ENCODE measurements at regions of chr6 and their contacts with region 1.

Region 1: GRCh38 chr6:27592481-27593199 is 119.7 kb upstream of the ZNF184 start:
- DNase-seq: peak in 8 of 35 experiments; percentile 2 to 46 (median 10)
- ATAC-seq: peak in 2 of 4 experiments; percentile 24 to 48
- H3K4me3 ChIP-seq: no peak overlapping the region
- H3K4me3 Mint-ChIP-seq: no peak overlapping the region
- H3K27ac ChIP-seq: no peak overlapping the region
- H3K27ac Mint-ChIP-seq: no peak overlapping the region
- H3K4me1 ChIP-seq: peaks cover 2 to 14% of the 10 kb centered on the region in 2 experiments
- H3K4me1 Mint-ChIP-seq: no peaks in the 10 kb centered on the region
- H3K27me3 ChIP-seq: peaks cover 32 to 66% of the 10 kb centered on the region in 2 experiments
- H3K27me3 Mint-ChIP-seq: peaks cover 27 to 40% of the 10 kb centered on the region in 2 donors

Region 2: GRCh38 chr6:27518881-27519795 is 73.5 kb before region 1 on chr6:
- CTCF ChIA-PET with region 1: no interaction called
- POLR2A ChIA-PET with region 1: no interaction called
- DNase-seq: peak; percentile 37 to 84 (median 53)
- ATAC-seq: peak; percentile 67 to 80 (median 76)
- H3K4me3 ChIP-seq: peak overlapping the region; percentile 92 to 98
- H3K4me3 Mint-ChIP-seq: peak overlapping the region; percentile 86 to 99 (median 90)
- H3K27ac ChIP-seq: peak overlapping the region; percentile 78
- H3K27ac Mint-ChIP-seq: peak overlapping the region; percentile 60 to 71
- H3K4me1 ChIP-seq: peaks cover 6 to 15% of the 10 kb centered on the region in 2 experiments
- H3K4me1 Mint-ChIP-seq: peaks cover 16 to 27% (median 20%) of the 10 kb centered on the region in 3 donors
- H3K27me3 ChIP-seq: peaks cover 3 to 17% of the 10 kb centered on the region in 2 experiments
- H3K27me3 Mint-ChIP-seq: peaks cover 9 to 24% of the 10 kb centered on the region in 2 donors

Region 3: GRCh38 chr6:27642744-27643456 is 50.3 kb after region 1 on chr6:
- CTCF ChIA-PET with region 1: interaction called in 1 of 2 experiments, 12 read pairs
- POLR2A ChIA-PET with region 1: no interaction called
- DNase-seq: no peak
- ATAC-seq: no peak
- H3K4me3 ChIP-seq: no peak overlapping the region
- H3K4me3 Mint-ChIP-seq: no peak overlapping the region
- H3K27ac ChIP-seq: no peak overlapping the region
- H3K27ac Mint-ChIP-seq: no peak overlapping the region
- H3K4me1 ChIP-seq: no peaks in the 10 kb centered on the region
- H3K4me1 Mint-ChIP-seq: no peaks in the 10 kb centered on the region
- H3K27me3 ChIP-seq: peaks cover 0 to 38% of the 10 kb centered on the region in 2 experiments
- H3K27me3 Mint-ChIP-seq: peaks cover 60 to 61% of the 10 kb centered on the region in 2 donors

Region 4: DNA sequence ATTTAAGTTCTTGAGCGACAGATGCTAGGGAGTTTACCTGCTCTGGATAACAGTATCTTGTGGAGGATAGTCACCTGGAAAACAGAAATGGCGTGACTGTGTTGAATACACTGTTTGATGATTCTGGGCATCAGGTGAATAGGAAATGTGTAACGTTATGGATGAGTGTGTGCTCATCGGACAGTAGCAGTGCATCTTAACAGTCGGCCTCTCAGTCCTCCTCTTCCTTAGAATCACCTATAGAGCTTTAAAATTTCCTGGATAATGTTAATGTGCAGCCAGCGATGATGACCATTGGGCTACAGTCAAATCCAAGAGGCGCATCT is 101.9 kb after region 1 on chr6:
- CTCF ChIA-PET with region 1: no interaction called
- POLR2A ChIA-PET with region 1: no interaction called
- DNase-seq: no peak
- ATAC-seq: peak in 1 of 4 experiments; percentile 19
- H3K4me3 ChIP-seq: peak overlapping the region; percentile 71 to 98
- H3K4me3 Mint-ChIP-seq: peak overlapping the region; percentile 94 to 97 (median 97)
- H3K27ac ChIP-seq: no peak overlapping the region
- H3K27ac Mint-ChIP-seq: peak overlapping the region in 1 of 2 donors; percentile 90
- H3K4me1 ChIP-seq: peaks cover 0 to 20% of the 10 kb centered on the region in 2 experiments
- H3K4me1 Mint-ChIP-seq: peaks cover 22 to 35% (median 32%) of the 10 kb centered on the region in 3 donors
- H3K27me3 ChIP-seq: peaks cover 3 to 4% of the 10 kb centered on the region in 2 experiments
- H3K27me3 Mint-ChIP-seq: no peaks in the 10 kb centered on the region

Region 5: DNA sequence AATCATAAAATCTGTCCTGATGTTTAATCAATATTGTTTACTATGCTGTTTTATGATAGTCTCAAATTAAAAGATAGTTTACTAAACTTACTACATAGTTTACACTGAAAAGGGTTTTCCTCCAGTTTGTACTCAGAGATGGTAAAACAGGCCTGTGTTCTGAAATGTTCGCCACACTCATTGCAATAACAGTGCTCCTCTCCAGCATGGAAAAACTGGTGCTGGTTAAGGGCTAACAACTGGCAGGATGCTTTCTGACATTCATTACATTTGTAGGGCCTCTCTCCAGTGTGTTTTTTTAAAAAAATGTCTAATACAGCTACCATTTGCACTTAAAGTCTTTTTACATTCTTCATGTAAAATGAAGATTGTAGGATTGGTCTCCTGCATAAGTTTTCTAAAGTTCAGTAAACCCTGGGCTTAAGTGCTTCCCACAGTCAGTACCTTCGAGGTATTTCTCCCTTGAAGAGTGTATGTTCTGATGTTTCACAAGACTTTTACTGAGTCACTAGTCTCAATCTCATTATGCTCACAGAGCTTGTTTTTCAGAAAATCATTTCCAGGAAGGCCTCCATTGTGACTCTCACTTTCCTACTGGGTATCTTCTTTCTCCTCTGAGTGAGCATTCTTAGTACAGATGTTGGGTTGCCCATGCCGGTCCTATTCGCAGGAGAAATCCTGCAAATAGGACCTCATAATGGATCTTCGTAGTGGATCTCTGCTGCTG is 815.6 kb after region 1 on chr6:
- CTCF ChIA-PET with region 1: no interaction called
- POLR2A ChIA-PET with region 1: no interaction called
- DNase-seq: no peak
- ATAC-seq: no peak
- H3K4me3 ChIP-seq: no peak overlapping the region
- H3K4me3 Mint-ChIP-seq: no peak overlapping the region
- H3K27ac ChIP-seq: no peak overlapping the region
- H3K27ac Mint-ChIP-seq: no peak overlapping the region
- H3K4me1 ChIP-seq: no peaks in the 10 kb centered on the region
- H3K4me1 Mint-ChIP-seq: no peaks in the 10 kb centered on the region
- H3K27me3 ChIP-seq: no peaks in the 10 kb centered on the region
- H3K27me3 Mint-ChIP-seq: peaks cover 27 to 48% of the 10 kb centered on the region in 2 donors

Region 6: GRCh38 chr6:28618898-28619555 is 1026.4 kb after region 1 on chr6:
- CTCF ChIA-PET with region 1: no interaction called
- POLR2A ChIA-PET with region 1: no interaction called
- DNase-seq: no peak
- ATAC-seq: no peak
- H3K4me3 ChIP-seq: no peak overlapping the region
- H3K4me3 Mint-ChIP-seq: no peak overlapping the region
- H3K27ac ChIP-seq: no peak overlapping the region
- H3K27ac Mint-ChIP-seq: no peak overlapping the region
- H3K4me1 ChIP-seq: no peaks in the 10 kb centered on the region
- H3K4me1 Mint-ChIP-seq: peaks cover 0 to 4% (median 0%) of the 10 kb centered on the region in 3 donors
- H3K27me3 ChIP-seq: peaks cover 5 to 41% of the 10 kb centered on the region in 2 experiments
- H3K27me3 Mint-ChIP-seq: peaks cover 55 to 66% of the 10 kb centered on the region in 2 donors